ENCODE measurements at regions of chr21 and their contacts with region 1.

Region 1: GRCh38 chr21:36504067-36505058 is 24.4 kb upstream of the CLDN14 start:
- H3K4me3 ChIP-seq: no peak overlapping the region
- H3K27ac ChIP-seq: no peak overlapping the region
- H3K4me1 ChIP-seq: peaks cover 32% of the 10 kb centered on the region
- CTCF ChIP-seq: peak; percentile 33

Region 2: DNA sequence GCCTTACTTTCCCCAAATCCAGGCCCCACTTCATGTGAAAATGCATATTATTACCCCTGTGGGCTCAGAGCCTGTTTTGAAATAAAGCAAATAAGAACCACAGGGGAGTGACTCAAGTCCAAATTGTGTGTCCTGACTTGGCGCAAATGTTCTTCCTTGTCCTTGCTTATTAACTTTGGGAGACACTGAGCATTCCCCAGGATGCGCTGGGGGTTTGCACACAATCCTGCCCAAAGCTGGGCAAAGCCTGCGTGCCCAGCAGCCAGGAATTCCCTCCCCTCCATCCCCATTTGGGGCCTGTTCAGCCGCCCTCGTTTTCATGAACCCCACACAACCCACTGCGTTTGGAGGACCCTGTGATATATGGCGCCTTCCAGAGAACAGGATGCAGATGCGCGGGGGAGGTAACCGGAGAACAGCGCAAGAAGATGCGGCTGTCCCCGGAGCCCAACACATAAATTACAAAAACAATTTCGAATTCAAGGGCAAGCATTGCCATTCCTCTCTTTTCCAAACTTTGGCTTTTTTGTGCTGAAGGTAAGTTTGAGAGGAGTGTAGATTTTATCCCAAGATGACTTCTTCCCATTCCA is 18.0 kb after region 1 on chr21:
- CTCF ChIA-PET with region 1: interaction called, 13 read pairs
- POLR2A ChIA-PET with region 1: no interaction called
- H3K4me3 ChIP-seq: no peak overlapping the region
- H3K27ac ChIP-seq: no peak overlapping the region
- H3K4me1 ChIP-seq: no peaks in the 10 kb centered on the region
- CTCF ChIP-seq: no peak

Region 3: GRCh38 chr21:36584940-36585542 is 80.7 kb after region 1 on chr21:
- CTCF ChIA-PET with region 1: interaction called, 11 read pairs
- POLR2A ChIA-PET with region 1: no interaction called
- H3K4me3 ChIP-seq: no peak overlapping the region
- H3K27ac ChIP-seq: no peak overlapping the region
- H3K4me1 ChIP-seq: no peaks in the 10 kb centered on the region; the same call in 1 of the 2 replicates
- CTCF ChIP-seq: no peak

Region 4: DNA sequence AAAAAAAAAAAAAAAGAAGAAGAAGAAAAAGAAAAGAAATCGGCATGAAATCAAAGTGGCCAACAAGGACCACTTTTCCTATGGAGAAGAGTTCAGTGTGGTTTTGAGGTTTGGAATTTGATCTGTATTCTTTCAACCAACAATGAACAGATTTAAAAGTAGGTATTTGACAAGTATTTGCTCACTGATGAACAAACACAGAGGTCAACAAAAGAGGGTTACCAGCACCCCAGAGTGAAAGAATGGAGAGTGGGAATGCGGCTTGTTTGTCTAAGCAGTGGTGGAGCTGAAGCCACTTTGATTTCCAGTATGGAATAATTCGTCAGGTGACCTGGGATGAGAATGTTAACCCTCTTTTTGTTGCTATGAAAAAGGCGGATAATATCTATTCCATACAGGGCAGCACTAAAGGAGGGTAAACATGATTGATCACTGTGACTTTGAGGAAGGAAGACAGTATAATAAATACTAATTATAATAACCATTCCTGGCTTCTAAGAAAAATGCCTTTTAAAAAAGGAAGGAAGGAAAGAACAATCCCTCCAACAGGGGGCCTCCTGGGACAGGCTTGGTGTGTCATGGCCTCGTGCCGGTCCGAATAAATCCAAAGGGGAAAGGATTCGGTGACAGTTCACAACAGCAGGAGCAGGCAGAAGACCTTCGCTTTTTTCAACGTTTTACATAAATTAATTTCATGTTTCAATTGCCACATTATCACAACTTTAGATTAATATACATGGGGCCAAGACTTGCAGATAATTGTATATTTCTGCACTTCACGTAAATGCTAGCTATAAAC is 157.3 kb after region 1 on chr21:
- CTCF ChIA-PET with region 1: interaction called, 10 read pairs
- POLR2A ChIA-PET with region 1: no interaction called
- H3K4me3 ChIP-seq: no peak overlapping the region
- H3K27ac ChIP-seq: no peak overlapping the region
- H3K4me1 ChIP-seq: no peaks in the 10 kb centered on the region
- CTCF ChIP-seq: peak; percentile 30; the same call in 1 of the 2 replicates

Region 5: GRCh38 chr21:36854391-36854790 is 350.0 kb after region 1 on chr21:
- CTCF ChIA-PET with region 1: interaction called, 22 read pairs
- POLR2A ChIA-PET with region 1: interaction called, 4 read pairs
- H3K4me3 ChIP-seq: no peak overlapping the region
- H3K27ac ChIP-seq: no peak overlapping the region
- H3K4me1 ChIP-seq: no peaks in the 10 kb centered on the region; the same call in 1 of the 2 replicates
- CTCF ChIP-seq: no peak; the same call in none of the 2 replicates

Region 6: GRCh38 chr21:36927719-36928117 is 423.4 kb after region 1 on chr21:
- CTCF ChIA-PET with region 1: interaction called, 10 read pairs
- POLR2A ChIA-PET with region 1: no interaction called
- H3K4me3 ChIP-seq: no peak overlapping the region
- H3K27ac ChIP-seq: no peak overlapping the region
- H3K4me1 ChIP-seq: peaks cover 5% of the 10 kb centered on the region
- CTCF ChIP-seq: peak; percentile 82